AG04449 (cell line): ENCODE measurements at regions of chr7 and their contacts with region 1.

Region 1: DNA sequence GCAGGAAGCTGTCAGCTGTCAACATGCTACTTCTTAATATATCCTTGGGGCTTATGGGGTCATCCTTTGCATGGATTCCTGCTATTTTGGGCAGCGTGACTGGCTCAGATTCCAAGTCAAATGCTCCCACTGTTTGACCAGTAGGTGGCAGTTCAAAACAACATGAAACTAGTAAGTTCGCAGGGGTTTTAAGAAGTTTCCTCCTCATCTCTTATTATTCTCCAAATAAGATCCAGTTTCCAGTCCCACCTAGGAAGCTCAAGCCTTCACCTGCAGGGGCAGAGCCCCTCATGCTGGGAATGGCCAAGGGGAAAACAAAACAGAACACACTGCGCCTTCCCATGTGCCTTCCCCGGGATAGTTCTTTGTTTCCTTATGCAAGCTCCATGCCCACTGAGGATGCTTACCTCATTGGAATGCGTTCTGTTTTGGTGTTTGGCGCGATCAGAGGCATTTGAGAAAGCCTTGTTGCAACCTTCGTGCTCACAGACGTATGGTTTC is 259.8 kb downstream of the GLI3 start:
- DNase-seq: no peak
- H3K4me3 ChIP-seq: no peak overlapping the region
- CTCF ChIP-seq: peak; percentile 69

Region 2: DNA sequence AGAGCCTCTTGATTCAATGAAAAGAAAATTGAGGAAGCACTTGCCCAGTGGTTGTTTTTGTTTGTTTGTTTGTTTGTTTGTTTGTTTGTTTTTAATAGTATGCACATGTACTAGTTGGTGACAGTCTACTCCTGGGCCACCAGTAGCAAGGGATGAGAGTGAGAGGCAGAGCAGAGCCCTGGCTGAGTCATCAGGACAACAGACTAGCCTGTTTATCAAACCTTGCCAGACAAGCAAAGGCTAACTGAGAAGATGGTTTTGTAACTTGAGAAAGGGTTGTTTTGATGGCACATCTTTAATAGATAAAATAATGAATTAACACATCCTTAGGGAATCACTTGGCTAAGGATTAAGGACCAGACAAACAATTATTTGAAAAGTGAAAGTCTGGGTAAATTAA is 352.4 kb before region 1 on chr7:
- CTCF ChIA-PET with region 1: no interaction called
- POLR2A ChIA-PET with region 1: no interaction called
- DNase-seq: no peak
- H3K4me3 ChIP-seq: no peak overlapping the region
- CTCF ChIP-seq: no peak

Region 3: DNA sequence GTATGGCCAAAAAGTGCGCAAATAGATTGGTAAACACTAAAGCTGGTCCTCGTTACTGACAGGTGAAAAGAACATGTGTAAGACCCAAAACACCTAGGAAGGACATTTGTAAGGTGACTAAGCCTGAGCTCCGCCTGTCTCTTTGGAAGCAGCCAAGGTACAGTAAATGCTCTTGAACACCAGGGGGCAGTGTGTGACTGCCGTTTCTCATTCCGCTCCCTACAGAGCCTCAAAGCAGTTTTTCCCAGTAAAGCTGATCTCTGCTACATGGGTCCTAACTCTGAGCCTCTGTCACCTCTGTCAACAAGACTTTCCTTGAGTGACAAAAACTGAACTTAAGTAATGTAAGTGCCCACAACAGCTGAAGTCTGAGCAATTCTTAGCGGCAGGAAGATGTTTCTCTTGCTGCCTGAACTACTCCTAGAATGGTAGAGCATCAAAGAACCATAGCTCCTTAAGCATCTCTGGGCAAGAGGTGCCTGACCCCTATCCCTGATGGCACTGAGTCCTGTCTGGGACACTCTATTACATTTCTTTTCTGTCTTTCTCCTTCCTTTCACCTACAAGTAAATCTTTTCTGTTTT is 36.3 kb before region 1 on chr7:
- CTCF ChIA-PET with region 1: interaction called, 112 read pairs
- POLR2A ChIA-PET with region 1: no interaction called
- DNase-seq: no peak
- H3K4me3 ChIP-seq: no peak overlapping the region
- CTCF ChIP-seq: peak; percentile 83

Region 4: DNA sequence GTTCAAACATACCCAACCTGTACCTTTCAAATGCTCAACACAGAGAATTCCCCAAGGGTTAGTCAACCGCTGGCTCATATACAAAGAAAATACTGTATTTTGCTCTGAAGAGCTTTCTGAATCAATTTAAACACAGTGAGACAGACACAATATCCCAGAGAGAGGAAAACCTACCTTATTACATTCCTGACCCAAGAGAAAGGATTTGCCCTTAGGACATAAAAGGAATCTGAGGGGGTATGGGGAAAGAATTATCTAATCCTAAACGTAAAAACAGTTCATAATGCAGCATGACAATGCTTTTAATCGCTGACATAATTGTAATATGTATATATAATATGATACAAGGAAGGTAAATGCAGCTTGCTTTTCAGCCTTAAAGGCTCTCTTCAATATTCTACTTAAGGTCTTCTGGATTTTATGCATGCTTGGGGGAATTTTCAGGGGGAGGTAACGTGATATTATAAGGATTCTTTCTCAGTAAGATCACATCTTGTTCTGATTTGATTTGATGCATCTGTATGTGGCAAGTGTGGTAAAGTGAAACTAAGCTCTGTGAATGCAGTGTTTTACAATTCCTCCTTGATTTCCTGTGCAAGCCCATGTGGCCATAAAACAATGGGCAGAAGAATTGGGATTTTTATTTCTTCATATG is 19.3 kb after region 1 on chr7:
- CTCF ChIA-PET with region 1: interaction called, 42 read pairs
- POLR2A ChIA-PET with region 1: no interaction called
- DNase-seq: peak; percentile 42
- H3K4me3 ChIP-seq: peak overlapping the region; percentile 21
- CTCF ChIP-seq: no peak

Region 5: GRCh38 chr7:42222891-42223290 is 245.7 kb after region 1 on chr7:
- CTCF ChIA-PET with region 1: interaction called, 16 read pairs
- POLR2A ChIA-PET with region 1: no interaction called
- DNase-seq: no peak
- H3K4me3 ChIP-seq: no peak overlapping the region
- CTCF ChIP-seq: no peak

Region 6: GRCh38 chr7:42247301-42247700 is 270.1 kb after region 1 on chr7:
- CTCF ChIA-PET with region 1: interaction called, 38 read pairs
- POLR2A ChIA-PET with region 1: no interaction called
- DNase-seq: no peak
- H3K4me3 ChIP-seq: no peak overlapping the region
- CTCF ChIP-seq: peak; percentile 32

Region 7: DNA sequence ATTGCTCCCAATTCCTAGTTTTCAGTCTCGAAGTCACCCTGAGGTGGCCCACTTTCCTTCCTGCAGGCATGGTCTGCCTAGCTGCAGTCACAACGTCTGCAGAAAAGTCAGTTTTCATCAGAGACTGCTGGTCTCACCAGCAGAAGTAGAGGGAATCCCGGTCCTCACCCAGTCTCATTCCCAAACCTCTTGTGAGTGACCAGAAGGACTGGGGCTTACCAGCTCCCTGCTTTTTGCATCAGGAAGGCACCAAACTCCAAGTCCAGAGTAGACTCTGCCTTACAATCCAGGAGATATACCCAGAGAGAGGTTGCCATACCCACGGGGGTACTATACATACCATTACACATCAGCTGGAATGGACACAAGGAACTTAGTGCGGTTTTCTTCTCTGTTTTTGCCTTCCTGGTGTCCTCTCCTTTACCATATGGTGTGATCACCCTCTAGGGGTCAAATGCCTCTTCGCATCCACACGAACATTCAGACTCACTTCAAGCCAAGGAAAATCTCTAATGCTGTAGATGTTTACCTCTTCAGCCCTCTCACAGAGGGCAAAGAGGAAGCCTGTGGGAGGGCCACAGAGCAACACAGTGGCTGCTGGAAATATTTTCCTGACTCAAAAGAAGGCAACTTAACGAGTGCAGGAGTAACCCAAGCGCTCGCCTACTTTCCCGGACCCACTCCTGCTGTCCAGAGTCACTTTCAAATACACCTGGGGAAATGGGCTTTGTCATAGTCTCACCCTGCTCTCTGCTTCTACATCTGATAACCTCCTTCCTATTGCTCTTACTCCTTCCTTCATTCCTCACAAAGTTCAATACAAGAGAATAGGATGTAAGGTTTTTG is 713.8 kb after region 1 on chr7:
- CTCF ChIA-PET with region 1: interaction called, 40 read pairs
- POLR2A ChIA-PET with region 1: no interaction called
- DNase-seq: no peak
- H3K4me3 ChIP-seq: no peak overlapping the region
- CTCF ChIP-seq: peak; percentile 59

Region 8: GRCh38 chr7:42876182-42877068 is 899.2 kb after region 1 on chr7:
- CTCF ChIA-PET with region 1: interaction called, 37 read pairs
- POLR2A ChIA-PET with region 1: no interaction called
- DNase-seq: no peak
- H3K4me3 ChIP-seq: no peak overlapping the region
- CTCF ChIP-seq: peak; percentile 72